Activated CD8-positive, alpha-beta T cell treated with anti-CD3 and anti-CD28 coated beads, Interleukin-2, amount 10 ng/mL, durations not matched to agents 7 days and 5 days (primary cell): ENCODE measurements at regions of chr16 and their contacts with region 1.

Region 1: GRCh38 chr16:22077700-22078313 is 14.5 kb upstream of the VWA3A start:
- DNase-seq: peak; percentile 82
- ATAC-seq: peak; percentile 64
- H3K4me3 Mint-ChIP-seq: no peak overlapping the region
- H3K27ac Mint-ChIP-seq: no peak overlapping the region
- H3K4me1 Mint-ChIP-seq: no peaks in the 10 kb centered on the region
- H3K27me3 Mint-ChIP-seq: no peaks in the 10 kb centered on the region

Region 2: DNA sequence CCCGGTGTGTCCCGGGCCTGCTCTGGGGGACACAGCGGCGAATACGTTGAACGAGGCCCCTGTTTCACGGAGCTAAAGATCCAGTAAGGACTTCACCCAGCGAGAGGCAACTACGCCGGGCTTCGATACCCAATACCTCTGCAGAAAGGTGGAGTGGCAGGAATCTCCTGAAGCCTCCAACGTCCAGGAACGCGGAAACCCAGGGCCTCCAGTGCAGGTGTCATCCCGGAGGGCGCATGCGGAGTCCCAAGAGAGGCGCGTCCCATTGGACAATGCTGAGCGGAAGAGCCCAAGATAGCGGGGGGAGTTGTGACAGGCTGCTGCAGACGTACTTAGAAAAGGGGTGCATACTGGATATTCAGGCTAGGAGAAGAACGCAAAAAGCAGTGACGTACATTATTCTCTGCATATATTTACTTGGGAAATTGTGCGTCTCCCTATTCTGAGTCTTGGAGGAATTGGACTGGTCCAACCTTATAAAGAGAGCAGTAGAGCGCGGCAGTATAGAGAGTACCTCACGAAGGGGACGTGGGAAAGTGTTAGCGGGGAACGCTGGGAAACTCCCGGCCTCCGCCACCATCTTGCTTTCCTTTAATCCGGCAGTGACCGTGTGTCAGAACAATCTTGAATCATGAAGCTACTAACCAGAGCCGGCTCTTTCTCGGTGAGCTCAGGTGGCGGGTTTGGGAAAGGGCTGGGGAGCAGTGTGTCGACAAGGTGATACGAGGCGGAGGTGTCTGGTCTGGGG is 124.8 kb before region 1 on chr16 and contains the start of gene UQCRC2:
- CTCF ChIA-PET with region 1: interaction called, 16 read pairs
- POLR2A ChIA-PET with region 1: no interaction called
- DNase-seq: peak; percentile 90
- ATAC-seq: peak; percentile 94
- H3K4me3 Mint-ChIP-seq: peak within 1 kb of the TSS; percentile 94
- H3K27ac Mint-ChIP-seq: peak within 1 kb of the TSS; percentile 99
- H3K4me1 Mint-ChIP-seq: peaks cover 52% of the 10 kb centered on the region
- H3K27me3 Mint-ChIP-seq: no peaks in the 10 kb centered on the region
- total RNA-seq, gene UQCRC2: 231 to 238 TPM

Region 3: GRCh38 chr16:21989133-21989532 is 88.7 kb before region 1 on chr16:
- CTCF ChIA-PET with region 1: interaction called, 64 read pairs
- POLR2A ChIA-PET with region 1: no interaction called
- DNase-seq: no peak
- ATAC-seq: no peak
- H3K4me3 Mint-ChIP-seq: no peak overlapping the region
- H3K27ac Mint-ChIP-seq: no peak overlapping the region
- H3K4me1 Mint-ChIP-seq: peaks cover 12% of the 10 kb centered on the region
- H3K27me3 Mint-ChIP-seq: no peaks in the 10 kb centered on the region

Region 4: GRCh38 chr16:22014271-22014873 is 63.4 kb before region 1 on chr16:
- CTCF ChIA-PET with region 1: interaction called, 139 read pairs
- POLR2A ChIA-PET with region 1: interaction called, 6 read pairs
- DNase-seq: no peak
- ATAC-seq: no peak
- H3K4me3 Mint-ChIP-seq: no peak overlapping the region
- H3K27ac Mint-ChIP-seq: no peak overlapping the region
- H3K4me1 Mint-ChIP-seq: peaks cover 26% of the 10 kb centered on the region
- H3K27me3 Mint-ChIP-seq: no peaks in the 10 kb centered on the region

Region 5: DNA sequence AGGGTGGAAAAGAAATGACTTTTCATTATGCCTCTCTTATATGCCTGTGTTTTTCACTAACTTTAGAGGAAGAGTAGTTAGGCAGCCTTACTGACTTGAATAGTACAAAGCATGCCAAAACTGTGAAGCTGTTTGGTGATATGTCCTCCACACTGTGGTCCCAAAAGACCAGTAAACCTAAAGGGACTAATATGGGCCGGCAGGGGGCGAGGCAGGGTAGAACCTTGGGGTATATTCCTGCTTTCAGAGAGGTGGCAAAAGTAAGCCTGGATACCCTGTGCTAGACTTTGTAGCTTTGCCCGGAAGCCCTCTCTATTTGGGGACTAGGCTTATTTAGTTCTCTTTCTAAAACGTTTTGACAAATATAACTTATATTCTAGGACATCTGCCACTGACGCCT is 21.9 kb before region 1 on chr16:
- CTCF ChIA-PET with region 1: interaction called, 30 read pairs
- POLR2A ChIA-PET with region 1: no interaction called
- DNase-seq: no peak
- ATAC-seq: no peak
- H3K4me3 Mint-ChIP-seq: no peak overlapping the region
- H3K27ac Mint-ChIP-seq: no peak overlapping the region
- H3K4me1 Mint-ChIP-seq: peaks cover 23% of the 10 kb centered on the region
- H3K27me3 Mint-ChIP-seq: no peaks in the 10 kb centered on the region

Region 6: DNA sequence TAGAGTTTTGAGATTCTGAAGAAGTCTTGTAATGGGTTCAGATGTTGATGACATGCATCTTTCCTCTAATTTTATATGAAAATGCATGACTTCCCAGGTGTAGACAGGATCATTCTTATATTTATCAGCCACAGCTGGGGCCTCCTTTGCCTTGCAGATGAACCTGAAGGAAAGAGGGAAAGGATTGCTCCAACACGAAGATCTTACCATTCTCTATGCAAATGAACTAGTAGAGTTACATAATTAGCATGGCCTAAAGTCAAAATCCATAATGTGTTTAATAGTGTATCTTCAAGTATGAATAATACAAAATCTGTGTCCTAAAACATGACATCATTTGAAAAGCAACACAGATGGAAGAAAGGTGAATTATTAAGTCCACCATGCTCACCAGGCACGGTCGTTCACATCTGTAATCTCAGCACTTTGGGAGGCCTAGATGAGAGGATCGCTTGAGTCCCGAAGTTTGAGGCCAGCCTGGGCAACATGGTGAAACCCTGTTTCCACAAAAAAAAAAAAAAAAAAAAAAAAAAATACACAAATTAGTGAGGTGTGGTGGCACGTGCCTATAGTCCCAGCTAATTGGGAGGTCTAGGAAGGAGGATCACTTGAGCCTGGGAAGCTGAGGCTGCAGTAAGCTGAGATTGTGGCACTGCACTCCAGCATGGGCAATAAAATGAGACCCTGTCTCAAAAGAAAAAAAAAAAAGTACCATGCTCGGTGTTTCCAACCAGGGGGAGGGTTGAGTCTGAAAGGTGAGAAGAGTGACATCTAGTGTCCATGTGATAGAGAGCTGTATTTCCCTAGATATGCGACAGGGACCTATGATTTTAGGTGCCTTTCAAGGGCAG is 20.8 kb after region 1 on chr16:
- CTCF ChIA-PET with region 1: interaction called, 67 read pairs
- POLR2A ChIA-PET with region 1: no interaction called
- DNase-seq: peak; percentile 27
- ATAC-seq: peak; percentile 84
- H3K4me3 Mint-ChIP-seq: no peak overlapping the region
- H3K27ac Mint-ChIP-seq: no peak overlapping the region
- H3K4me1 Mint-ChIP-seq: peaks cover 2% of the 10 kb centered on the region
- H3K27me3 Mint-ChIP-seq: peaks cover 8% of the 10 kb centered on the region

Region 7: GRCh38 chr16:22123146-22123545 is 45.3 kb after region 1 on chr16:
- CTCF ChIA-PET with region 1: no interaction called
- POLR2A ChIA-PET with region 1: no interaction called
- DNase-seq: no peak
- ATAC-seq: no peak
- H3K4me3 Mint-ChIP-seq: no peak overlapping the region
- H3K27ac Mint-ChIP-seq: no peak overlapping the region
- H3K4me1 Mint-ChIP-seq: no peaks in the 10 kb centered on the region
- H3K27me3 Mint-ChIP-seq: peaks cover 2% of the 10 kb centered on the region

Region 8: GRCh38 chr16:22217889-22218730 is 140.3 kb after region 1 on chr16:
- CTCF ChIA-PET with region 1: no interaction called
- POLR2A ChIA-PET with region 1: no interaction called
- DNase-seq: no peak
- ATAC-seq: peak; percentile 70
- H3K4me3 Mint-ChIP-seq: no peak overlapping the region
- H3K27ac Mint-ChIP-seq: no peak overlapping the region
- H3K4me1 Mint-ChIP-seq: peaks cover 21% of the 10 kb centered on the region
- H3K27me3 Mint-ChIP-seq: no peaks in the 10 kb centered on the region